Left ventricle myocardium superior (tissue), 1 donor: ENCODE measurements at regions of chr7 and their contacts with region 1.

Region 1: GRCh38 chr7:40057292-40057691 is 77.1 kb downstream of the MPLKIP start:
- DNase-seq: no peak
- ATAC-seq: peak; percentile 92

Region 2: DNA sequence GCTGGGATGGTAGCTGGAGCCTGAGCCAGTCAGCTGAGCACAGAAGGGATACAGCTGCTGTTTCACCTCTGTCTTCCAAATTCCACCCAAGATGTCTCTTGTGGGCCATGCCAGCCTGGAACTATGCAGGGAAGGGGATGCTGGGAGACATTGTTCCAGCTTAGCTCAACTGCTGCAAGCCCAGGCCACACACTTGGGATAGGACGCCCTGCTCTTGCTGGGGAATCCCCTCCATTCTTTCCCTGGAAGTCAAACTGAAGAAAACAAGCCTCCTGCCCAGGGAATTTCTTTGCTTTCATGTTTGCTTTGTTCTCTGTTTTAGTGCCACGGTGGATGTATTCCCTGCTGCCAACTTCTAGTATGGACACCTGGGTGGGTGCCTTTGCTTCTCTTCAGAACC is 162.4 kb before region 1 on chr7:
- intact Hi-C with region 1: loop called (anchors 5 kb)
- DNase-seq: no peak
- ATAC-seq: no peak

Region 3: GRCh38 chr7:39949980-39950472 is 107.3 kb before region 1 on chr7 and contains the start of gene CDK13:
- intact Hi-C with region 1: loop called (anchors 2 kb)
- DNase-seq: peak; percentile 85
- ATAC-seq: peak; percentile 65
- total RNA-seq, gene CDK13: 21.3 TPM